Activated T-helper 1 cell treated with anti-CD3 and anti-CD28 coated beads, Interleukin-12 subunit alpha, Interleukin-12 subunit beta, Interleukin-2, Interleukin-4 antibody, amounts not matched to agents 30 ng/mL and 10 ng/mL and 1 ng/mL, durations not matched to agents 14 hours and 24 hours and 36 hours (primary cell): ENCODE measurements at regions of chr11 and their contacts with region 1.

Region 1: DNA sequence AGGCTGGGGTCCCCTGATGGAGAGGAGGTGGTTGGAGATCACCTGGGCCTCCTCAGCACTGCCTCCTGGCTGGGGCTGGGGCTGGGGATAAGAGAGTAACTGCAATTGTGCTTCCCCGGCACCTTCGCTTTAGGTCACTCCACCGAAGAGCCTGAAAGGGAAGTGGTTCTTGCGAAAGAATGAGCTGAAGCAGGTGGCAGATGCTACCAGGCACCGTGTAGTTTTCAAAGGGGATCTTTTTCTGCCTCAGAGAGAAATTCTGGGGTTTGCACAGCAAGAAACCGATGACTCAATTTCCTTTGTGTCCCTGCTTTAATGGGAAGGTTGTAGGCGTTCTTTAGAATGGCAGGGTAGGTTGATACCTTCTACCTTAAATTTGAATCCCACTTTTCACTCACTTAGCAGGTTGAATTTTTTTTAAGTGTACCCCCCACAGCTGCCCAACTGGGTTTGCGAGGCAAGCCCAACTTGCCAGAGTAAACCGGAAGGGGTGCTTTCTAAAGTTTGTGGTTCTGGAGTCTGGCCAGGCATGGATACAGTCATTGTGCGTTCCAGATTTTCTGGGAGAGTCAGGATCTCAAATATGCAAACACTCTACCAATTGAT is 5.3 kb downstream of the CD44 start:
- DNase-seq: peak; percentile 69
- H3K4me3 Mint-ChIP-seq: peak overlapping the region; percentile 97
- H3K27ac Mint-ChIP-seq: peak overlapping the region; percentile 93
- H3K4me1 Mint-ChIP-seq: peaks cover 84% of the 10 kb centered on the region
- H3K27me3 Mint-ChIP-seq: no peaks in the 10 kb centered on the region

Region 2: GRCh38 chr11:34243726-34244464 is 900.3 kb before region 1 on chr11:
- intact Hi-C with region 1: loop called (anchors 10 kb)
- DNase-seq: peak; percentile 36
- H3K4me3 Mint-ChIP-seq: peak overlapping the region; percentile 65
- H3K27ac Mint-ChIP-seq: peak overlapping the region; percentile 71
- H3K4me1 Mint-ChIP-seq: peaks cover 94% of the 10 kb centered on the region
- H3K27me3 Mint-ChIP-seq: peaks cover 11% of the 10 kb centered on the region

Region 3: DNA sequence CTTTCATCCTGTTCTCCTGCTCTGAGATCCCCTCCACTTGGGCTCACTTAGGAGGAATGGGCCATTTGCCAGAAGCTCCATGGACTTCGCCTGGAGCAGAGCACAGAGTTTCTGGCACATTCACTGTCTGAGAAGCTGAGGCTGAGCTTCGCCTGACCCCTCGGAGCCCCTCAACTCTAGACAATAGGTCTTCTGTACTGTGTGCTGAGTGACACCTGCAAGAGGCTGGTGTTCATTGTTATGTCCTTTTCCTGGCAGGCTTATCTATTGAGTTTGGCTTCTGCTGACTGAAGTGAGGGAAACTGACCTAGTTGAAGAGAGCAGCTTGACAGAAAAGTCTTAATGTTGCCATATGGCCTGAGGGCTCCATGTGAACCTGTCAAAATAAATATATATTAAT is 399.0 kb before region 1 on chr11:
- intact Hi-C with region 1: no loop called
- DNase-seq: no peak
- H3K4me3 Mint-ChIP-seq: no peak overlapping the region
- H3K27ac Mint-ChIP-seq: no peak overlapping the region
- H3K4me1 Mint-ChIP-seq: no peaks in the 10 kb centered on the region
- H3K27me3 Mint-ChIP-seq: peaks cover under 1% of the 10 kb centered on the region

Region 4: GRCh38 chr11:35082321-35083182 is 61.7 kb before region 1 on chr11:
- intact Hi-C with region 1: loop called (anchors 1 kb)
- DNase-seq: peak; percentile 85
- H3K4me3 Mint-ChIP-seq: peak overlapping the region; percentile 56
- H3K27ac Mint-ChIP-seq: peak overlapping the region; percentile 91
- H3K4me1 Mint-ChIP-seq: peaks cover 82% of the 10 kb centered on the region
- H3K27me3 Mint-ChIP-seq: no peaks in the 10 kb centered on the region

Region 5: GRCh38 chr11:35165423-35166368 is 21.5 kb after region 1 on chr11:
- intact Hi-C with region 1: loop called (anchors 1 kb)
- DNase-seq: peak; percentile 92
- H3K4me3 Mint-ChIP-seq: peak overlapping the region; percentile 63
- H3K27ac Mint-ChIP-seq: peak overlapping the region; percentile 97
- H3K4me1 Mint-ChIP-seq: peaks cover 100% of the 10 kb centered on the region
- H3K27me3 Mint-ChIP-seq: no peaks in the 10 kb centered on the region

Region 6: DNA sequence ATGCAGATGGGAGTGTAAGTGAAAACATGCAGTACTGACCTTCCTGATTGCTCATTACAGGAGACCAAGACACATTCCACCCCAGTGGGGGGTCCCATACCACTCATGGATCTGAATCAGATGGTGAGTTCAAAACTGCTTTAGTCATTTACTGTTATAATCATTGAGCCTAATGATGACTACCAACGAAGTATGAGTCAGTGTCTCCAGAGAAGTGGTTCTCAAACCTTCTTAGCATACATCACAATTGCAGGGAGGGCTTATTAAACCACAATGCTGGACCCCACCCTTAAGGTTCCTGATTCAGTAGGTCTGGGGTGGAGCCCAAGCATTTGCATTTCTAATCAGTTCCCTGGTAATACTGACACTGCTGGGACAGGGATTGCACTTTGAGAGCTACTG is 70.6 kb after region 1 on chr11:
- intact Hi-C with region 1: loop called (anchors 1 kb)
- DNase-seq: no peak
- H3K4me3 Mint-ChIP-seq: no peak overlapping the region
- H3K27ac Mint-ChIP-seq: no peak overlapping the region
- H3K4me1 Mint-ChIP-seq: peaks cover 49% of the 10 kb centered on the region
- H3K27me3 Mint-ChIP-seq: no peaks in the 10 kb centered on the region

Region 7: DNA sequence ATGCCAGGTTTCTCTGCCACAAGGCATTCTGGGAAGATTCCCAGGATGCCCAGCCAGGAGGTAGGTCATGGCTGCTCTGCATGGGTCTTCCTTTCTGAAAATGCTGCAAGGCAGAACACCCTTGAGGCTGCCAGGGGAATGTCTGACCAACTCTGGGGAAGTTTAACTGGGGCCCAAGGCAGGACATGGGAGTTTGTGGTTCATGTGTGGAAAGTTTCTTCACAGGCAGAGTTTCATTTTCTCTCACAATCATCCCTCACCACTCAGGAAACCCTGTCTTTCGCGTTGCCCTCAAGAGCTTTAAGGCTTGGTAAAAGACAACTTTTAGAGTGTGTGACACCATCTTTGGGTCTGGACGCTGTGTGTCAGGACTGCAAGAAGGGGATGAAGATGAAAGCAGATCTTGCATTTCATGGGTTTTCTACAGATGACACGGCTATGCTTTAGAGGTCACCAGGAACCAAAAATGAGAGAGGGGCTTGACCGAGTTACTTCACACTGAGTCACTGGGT is 128.2 kb after region 1 on chr11:
- intact Hi-C with region 1: loop called (anchors 1 kb)
- DNase-seq: peak; percentile 54
- H3K4me3 Mint-ChIP-seq: peak overlapping the region; percentile 3
- H3K27ac Mint-ChIP-seq: peak overlapping the region; percentile 86
- H3K4me1 Mint-ChIP-seq: peaks cover 61% of the 10 kb centered on the region
- H3K27me3 Mint-ChIP-seq: peaks cover 12% of the 10 kb centered on the region

Region 8: GRCh38 chr11:36425561-36426081 is 1281.4 kb after region 1 on chr11:
- intact Hi-C with region 1: loop called (anchors 10 kb)
- DNase-seq: no peak
- H3K4me3 Mint-ChIP-seq: no peak overlapping the region
- H3K27ac Mint-ChIP-seq: peak overlapping the region; percentile 25
- H3K4me1 Mint-ChIP-seq: peaks cover 62% of the 10 kb centered on the region
- H3K27me3 Mint-ChIP-seq: no peaks in the 10 kb centered on the region